HepG2 (cell line): ENCODE measurements at regions of chr15 and their contacts with region 1.

Region 1: DNA sequence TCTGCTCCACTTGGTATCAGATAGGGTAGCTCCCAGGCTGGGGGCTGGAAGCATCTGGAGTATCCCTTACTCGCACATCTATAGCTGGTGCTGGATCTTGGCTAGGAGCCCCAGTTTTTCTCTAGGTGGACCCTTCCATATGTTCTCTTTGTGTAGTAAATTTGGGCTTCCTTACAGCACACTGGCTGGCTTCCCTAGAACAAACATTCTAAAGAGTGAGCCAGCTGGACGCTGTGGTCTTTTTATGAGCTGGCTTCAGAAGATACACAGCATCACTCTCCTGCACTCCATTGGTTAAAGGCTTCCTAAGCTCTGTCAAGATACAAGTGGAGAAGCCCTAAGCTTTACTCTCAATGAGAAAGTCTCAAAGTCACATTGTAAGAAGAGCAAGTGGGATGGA is 322.1 kb downstream of the WDR72 start:
- DNase-seq: no peak
- ATAC-seq: no peak
- H3K4me3 ChIP-seq: no peak overlapping the region
- H3K27ac ChIP-seq: no peak overlapping the region
- H3K4me1 ChIP-seq: peaks cover 72% of the 10 kb centered on the region
- H3K27me3 ChIP-seq: no peaks in the 10 kb centered on the region
- CTCF ChIP-seq: no peak
- EP300 ChIP-seq: no peak
- POLR2A ChIP-seq: no peak
- RAD21 ChIP-seq: no peak

Region 2: GRCh38 chr15:53272116-53272515 is 165.2 kb before region 1 on chr15:
- CTCF ChIA-PET with region 1: no interaction called
- POLR2A ChIA-PET with region 1: no interaction called
- in situ Hi-C with region 1: no loop called
- intact Hi-C with region 1: no loop called
- DNase-seq: no peak
- ATAC-seq: no peak
- H3K4me3 ChIP-seq: no peak overlapping the region
- H3K27ac ChIP-seq: no peak overlapping the region
- H3K4me1 ChIP-seq: no peaks in the 10 kb centered on the region
- H3K27me3 ChIP-seq: no peaks in the 10 kb centered on the region
- CTCF ChIP-seq: no peak
- EP300 ChIP-seq: no peak
- POLR2A ChIP-seq: no peak
- RAD21 ChIP-seq: no peak

Region 3: DNA sequence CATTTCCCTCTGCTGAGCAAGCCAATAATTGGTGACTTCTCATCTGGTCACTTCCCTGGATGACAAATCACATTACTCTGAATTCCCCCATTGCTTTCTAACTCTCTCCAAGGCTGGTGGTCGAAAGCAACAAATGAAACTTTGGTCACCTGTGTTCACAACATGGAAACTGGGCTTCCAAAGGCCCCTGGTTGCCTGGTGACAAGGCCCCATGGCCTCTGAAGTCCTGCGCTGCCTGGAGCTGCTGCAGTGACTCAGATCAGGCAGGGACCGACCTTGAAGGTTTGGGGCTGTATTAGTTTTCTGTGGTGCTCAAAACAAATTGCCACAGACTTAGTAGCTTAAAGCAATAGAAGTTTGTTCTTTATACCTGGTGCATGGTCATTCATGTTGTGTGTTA is 23.2 kb before region 1 on chr15:
- CTCF ChIA-PET with region 1: no interaction called
- POLR2A ChIA-PET with region 1: interaction called, 3 read pairs
- in situ Hi-C with region 1: no loop called
- intact Hi-C with region 1: loop called (anchors 2 kb)
- DNase-seq: peak; percentile 75
- ATAC-seq: peak; percentile 98
- H3K4me3 ChIP-seq: no peak overlapping the region
- H3K27ac ChIP-seq: peak overlapping the region; percentile 50
- H3K4me1 ChIP-seq: peaks cover 44% of the 10 kb centered on the region
- H3K27me3 ChIP-seq: no peaks in the 10 kb centered on the region
- CTCF ChIP-seq: no peak
- EP300 ChIP-seq: peak; percentile 43 to 54; a peak in 2 of 4 replicates
- POLR2A ChIP-seq: no peak
- RAD21 ChIP-seq: no peak